ENCODE measurements at regions of chr2 and their contacts with region 1.

Region 1: GRCh38 chr2:34909992-34910705 is 1311.0 kb upstream of the FAM98A start:
- DNase-seq: no peak
- ATAC-seq: no peak
- H3K4me3 ChIP-seq: no peak overlapping the region
- H3K27ac ChIP-seq: no peak overlapping the region
- H3K4me1 ChIP-seq: no peaks in the 10 kb centered on the region
- H3K27me3 ChIP-seq: no peaks in the 10 kb centered on the region
- CTCF ChIP-seq: peak in 4 of 9 donors; percentile 6 to 27 (median 14)

Region 2: GRCh38 chr2:34646901-34647300 is 263.2 kb before region 1 on chr2:
- intact Hi-C with region 1: no loop called
- DNase-seq: no peak
- ATAC-seq: no peak
- H3K4me3 ChIP-seq: no peak overlapping the region
- H3K27ac ChIP-seq: no peak overlapping the region
- H3K4me1 ChIP-seq: no peaks in the 10 kb centered on the region
- H3K27me3 ChIP-seq: no peaks in the 10 kb centered on the region
- CTCF ChIP-seq: no peak

Region 3: GRCh38 chr2:34747643-34748042 is 162.5 kb before region 1 on chr2:
- intact Hi-C with region 1: no loop called
- DNase-seq: no peak
- ATAC-seq: no peak
- H3K4me3 ChIP-seq: no peak overlapping the region
- H3K27ac ChIP-seq: no peak overlapping the region
- H3K4me1 ChIP-seq: no peaks in the 10 kb centered on the region
- H3K27me3 ChIP-seq: no peaks in the 10 kb centered on the region
- CTCF ChIP-seq: no peak

Region 4: DNA sequence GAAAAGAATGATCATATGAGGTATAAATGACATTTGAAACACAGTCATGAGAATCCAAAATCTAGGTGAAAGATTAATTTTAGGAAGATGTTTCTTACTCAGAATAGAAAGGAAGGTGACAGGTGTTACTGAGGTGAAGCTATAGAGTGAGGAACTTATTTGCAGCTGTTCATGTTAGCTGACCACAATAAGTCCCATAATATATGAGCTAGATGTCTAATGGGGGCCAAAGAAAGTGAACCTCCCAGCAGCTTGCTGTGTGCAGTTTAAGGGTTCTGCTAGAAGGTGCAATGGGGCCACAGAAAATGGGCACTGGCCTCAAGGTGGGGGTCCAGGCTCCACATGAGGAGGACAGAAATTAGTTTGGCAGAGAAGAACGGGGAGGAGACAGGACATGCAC is 70.5 kb after region 1 on chr2:
- intact Hi-C with region 1: loop called in 1 of 10 experiments (anchors 2 kb)
- DNase-seq: no peak
- ATAC-seq: no peak
- H3K4me3 ChIP-seq: no peak overlapping the region
- H3K27ac ChIP-seq: no peak overlapping the region
- H3K4me1 ChIP-seq: no peaks in the 10 kb centered on the region
- H3K27me3 ChIP-seq: no peaks in the 10 kb centered on the region
- CTCF ChIP-seq: no peak